CD4-positive, alpha-beta T cell (primary cell): ENCODE measurements at regions of chr12 and their contacts with region 1.

Region 1: DNA sequence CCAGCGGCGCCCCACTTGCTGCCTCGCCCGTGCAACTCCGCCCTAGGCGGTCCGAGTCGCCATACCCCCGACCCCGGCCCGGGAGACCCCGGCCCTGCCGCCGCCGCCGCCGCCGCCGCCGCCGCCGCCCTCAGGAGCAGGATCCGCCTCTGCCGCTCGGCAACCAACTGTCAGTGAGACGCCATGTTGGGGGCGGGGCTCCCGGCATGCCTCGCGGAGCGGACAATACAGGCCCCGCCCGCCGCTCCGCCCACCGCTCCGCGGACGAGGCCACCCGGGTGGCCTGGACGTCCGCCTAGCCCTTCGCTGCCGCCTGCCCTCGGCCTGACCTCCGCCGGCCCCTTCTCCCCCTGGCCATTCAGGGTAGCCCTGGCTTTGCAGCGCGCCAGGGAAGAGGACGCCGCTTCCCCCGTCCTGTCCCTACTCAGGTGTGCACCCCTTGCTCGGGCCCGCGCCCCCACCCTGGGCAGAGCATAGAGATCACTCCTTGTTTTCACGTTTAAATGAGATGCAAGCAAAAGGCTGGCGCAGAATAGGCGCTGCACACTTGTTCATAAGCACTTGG is at the start of gene HECTD4:
- DNase-seq: peak; percentile 81 to 97 (median 92)
- ATAC-seq: peak; percentile 98
- H3K4me3 ChIP-seq: peak within 1 kb of the TSS; percentile 81
- H3K4me3 Mint-ChIP-seq: peak within 1 kb of the TSS; percentile 99
- H3K27ac ChIP-seq: peak within 1 kb of the TSS; percentile 44 to 62
- H3K27ac Mint-ChIP-seq: peak within 1 kb of the TSS; percentile 85
- H3K4me1 ChIP-seq: peaks cover 19% of the 10 kb centered on the region
- H3K4me1 Mint-ChIP-seq: peaks cover 27% of the 10 kb centered on the region
- H3K27me3 ChIP-seq: no peaks in the 10 kb centered on the region
- H3K27me3 Mint-ChIP-seq: no peaks in the 10 kb centered on the region
- CTCF ChIP-seq: no peak
- total RNA-seq, gene HECTD4: 40.2 to 43.3 TPM

Region 2: DNA sequence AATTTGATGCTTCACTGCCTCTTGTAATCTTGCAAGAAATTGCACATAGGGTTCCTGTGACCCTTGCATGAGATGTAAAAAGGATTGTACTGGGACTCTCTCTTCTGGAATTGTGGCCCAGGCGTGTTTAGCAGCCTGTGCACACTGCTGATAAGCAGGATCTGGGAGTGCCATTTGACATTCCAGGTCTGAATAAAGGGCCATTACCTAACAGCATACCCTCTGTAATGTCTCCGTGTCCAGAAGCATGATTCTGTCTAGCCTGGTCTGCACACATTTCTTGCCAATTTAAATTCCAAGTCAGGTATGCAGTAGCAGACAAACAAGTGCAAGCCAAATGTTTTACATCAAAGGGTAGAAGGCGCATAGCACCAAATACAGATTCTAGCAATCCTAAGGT is 558.4 kb before region 1 on chr12:
- CTCF ChIA-PET with region 1: no interaction called
- POLR2A ChIA-PET with region 1: no interaction called
- intact Hi-C with region 1: loop called in 1 of 2 experiments (anchors 2 kb)
- DNase-seq: no peak
- ATAC-seq: no peak
- H3K4me3 ChIP-seq: no peak overlapping the region
- H3K4me3 Mint-ChIP-seq: no peak overlapping the region
- H3K27ac ChIP-seq: no peak overlapping the region
- H3K27ac Mint-ChIP-seq: no peak overlapping the region
- H3K4me1 ChIP-seq: no peaks in the 10 kb centered on the region
- H3K4me1 Mint-ChIP-seq: no peaks in the 10 kb centered on the region
- H3K27me3 ChIP-seq: no peaks in the 10 kb centered on the region
- H3K27me3 Mint-ChIP-seq: peaks cover 20% of the 10 kb centered on the region
- CTCF ChIP-seq: no peak

Region 3: GRCh38 chr12:111942557-111942956 is 439.8 kb before region 1 on chr12:
- CTCF ChIA-PET with region 1: no interaction called
- POLR2A ChIA-PET with region 1: no interaction called
- intact Hi-C with region 1: loop called (anchors 5 kb)
- DNase-seq: no peak
- ATAC-seq: no peak
- H3K4me3 ChIP-seq: no peak overlapping the region
- H3K4me3 Mint-ChIP-seq: no peak overlapping the region
- H3K27ac ChIP-seq: no peak overlapping the region
- H3K27ac Mint-ChIP-seq: no peak overlapping the region
- H3K4me1 ChIP-seq: peaks cover 6% of the 10 kb centered on the region
- H3K4me1 Mint-ChIP-seq: peaks cover 18% of the 10 kb centered on the region
- H3K27me3 ChIP-seq: no peaks in the 10 kb centered on the region
- H3K27me3 Mint-ChIP-seq: no peaks in the 10 kb centered on the region
- CTCF ChIP-seq: no peak

Region 4: DNA sequence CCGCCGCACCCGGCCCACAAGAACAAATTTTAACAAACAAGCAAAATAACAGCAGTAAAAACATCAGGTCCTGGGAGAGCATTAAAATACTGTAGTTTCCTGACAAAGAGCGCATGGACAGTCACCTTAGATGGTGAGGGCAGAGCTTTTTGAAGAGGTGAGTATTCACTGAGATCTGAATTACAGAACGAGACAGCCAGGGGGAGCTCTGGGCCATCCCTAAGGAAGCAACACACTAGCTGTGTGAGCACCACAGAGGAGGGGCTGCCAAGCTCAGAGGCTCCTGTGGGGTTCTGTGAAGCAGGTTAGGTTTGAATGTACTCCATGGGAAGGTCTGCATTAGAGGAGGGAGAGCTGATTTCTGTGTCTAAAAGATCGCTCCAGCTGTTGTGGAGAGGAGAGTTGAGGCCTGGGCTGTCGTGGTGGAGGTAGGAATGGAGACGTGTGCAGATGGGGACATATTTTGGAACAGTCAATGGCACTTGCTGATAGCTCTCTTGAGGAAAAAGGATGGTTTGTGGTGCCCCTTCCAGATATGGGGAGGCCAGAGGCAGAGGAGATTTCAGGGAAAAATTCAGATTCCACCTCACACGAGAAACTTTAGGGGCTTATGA is 184.1 kb before region 1 on chr12:
- CTCF ChIA-PET with region 1: interaction called, 16 read pairs
- POLR2A ChIA-PET with region 1: interaction called, 10 read pairs
- intact Hi-C with region 1: loop called (anchors 1 kb)
- DNase-seq: peak; percentile 14 to 62 (median 32)
- ATAC-seq: peak; percentile 78
- H3K4me3 ChIP-seq: no peak overlapping the region
- H3K4me3 Mint-ChIP-seq: no peak overlapping the region
- H3K27ac ChIP-seq: no peak overlapping the region
- H3K27ac Mint-ChIP-seq: no peak overlapping the region
- H3K4me1 ChIP-seq: no peaks in the 10 kb centered on the region
- H3K4me1 Mint-ChIP-seq: no peaks in the 10 kb centered on the region
- H3K27me3 ChIP-seq: no peaks in the 10 kb centered on the region
- H3K27me3 Mint-ChIP-seq: no peaks in the 10 kb centered on the region
- CTCF ChIP-seq: peak; percentile 45

Region 5: GRCh38 chr12:112409064-112409905 is 27.0 kb after region 1 on chr12 and contains the start of gene RPL6:
- CTCF ChIA-PET with region 1: interaction called, 10 read pairs
- POLR2A ChIA-PET with region 1: no interaction called
- intact Hi-C with region 1: loop called in 1 of 2 experiments (anchors 2 kb)
- DNase-seq: peak; percentile 55 to 92 (median 69)
- ATAC-seq: peak; percentile 86
- H3K4me3 ChIP-seq: peak within 1 kb of the TSS; percentile 81
- H3K4me3 Mint-ChIP-seq: peak within 1 kb of the TSS; percentile 100
- H3K27ac ChIP-seq: peak within 1 kb of the TSS; percentile 80 to 89
- H3K27ac Mint-ChIP-seq: peak within 1 kb of the TSS; percentile 99
- H3K4me1 ChIP-seq: peaks cover 23% of the 10 kb centered on the region
- H3K4me1 Mint-ChIP-seq: peaks cover 34% of the 10 kb centered on the region
- H3K27me3 ChIP-seq: no peaks in the 10 kb centered on the region
- H3K27me3 Mint-ChIP-seq: no peaks in the 10 kb centered on the region
- CTCF ChIP-seq: no peak
- total RNA-seq, gene RPL6: 1,794 to 1,807 TPM

Region 6: GRCh38 chr12:112424126-112424525 is 41.8 kb after region 1 on chr12:
- CTCF ChIA-PET with region 1: no interaction called
- POLR2A ChIA-PET with region 1: no interaction called
- intact Hi-C with region 1: no loop called
- DNase-seq: no peak
- ATAC-seq: no peak
- H3K4me3 ChIP-seq: no peak overlapping the region
- H3K4me3 Mint-ChIP-seq: no peak overlapping the region
- H3K27ac ChIP-seq: no peak overlapping the region
- H3K27ac Mint-ChIP-seq: peak overlapping the region; percentile 1
- H3K4me1 ChIP-seq: peaks cover 47% of the 10 kb centered on the region
- H3K4me1 Mint-ChIP-seq: peaks cover 50% of the 10 kb centered on the region
- H3K27me3 ChIP-seq: no peaks in the 10 kb centered on the region
- H3K27me3 Mint-ChIP-seq: no peaks in the 10 kb centered on the region
- CTCF ChIP-seq: no peak